ENCODE measurements at regions of chr3 and their contacts with region 1.

Region 1: DNA sequence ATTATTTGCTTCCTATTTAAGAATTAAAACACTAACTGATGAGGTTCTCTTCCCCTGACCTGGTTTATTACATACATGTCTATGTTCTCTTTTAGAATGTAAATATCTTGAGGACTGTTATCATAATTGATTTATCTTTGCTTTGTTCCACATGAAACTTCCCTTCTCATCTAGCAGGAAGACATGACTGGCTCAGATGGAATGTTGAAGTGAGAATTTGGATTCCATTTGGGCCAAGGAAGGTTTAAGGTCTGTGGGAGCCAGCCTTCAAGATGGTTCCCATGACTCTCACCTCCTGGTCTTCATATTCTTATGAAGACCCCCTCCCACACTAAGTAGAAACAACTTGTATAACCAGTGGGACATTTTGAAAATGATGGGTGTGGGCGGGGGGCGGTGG is 222.2 kb upstream of the GADL1 start:
- DNase-seq: peak; percentile 16
- ATAC-seq: no peak
- H3K4me3 ChIP-seq: no peak overlapping the region
- H3K27ac ChIP-seq: no peak overlapping the region
- H3K4me1 ChIP-seq: peaks cover 9% of the 10 kb centered on the region
- H3K27me3 ChIP-seq: no peaks in the 10 kb centered on the region
- CTCF ChIP-seq: no peak

Region 2: DNA sequence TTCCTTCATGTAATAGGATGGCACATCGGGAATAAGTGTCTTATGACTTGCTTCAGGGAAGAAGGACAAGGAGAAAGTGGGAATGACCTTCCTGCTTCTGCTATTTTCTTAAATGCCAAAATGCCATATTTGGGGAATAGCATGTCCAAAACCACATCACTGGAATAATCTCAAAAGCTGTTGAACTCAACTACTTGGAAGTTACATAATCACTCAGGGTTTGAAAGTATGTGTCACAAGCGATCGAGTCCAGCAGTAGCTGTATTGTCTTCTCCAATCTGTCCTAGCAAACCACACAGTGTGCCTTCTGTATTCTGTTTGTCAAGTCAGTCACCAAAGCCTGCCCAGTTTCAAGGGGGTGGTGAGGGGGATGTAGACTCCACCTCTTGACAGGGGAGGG is 163.9 kb before region 1 on chr3:
- CTCF ChIA-PET with region 1: no interaction called
- POLR2A ChIA-PET with region 1: interaction called, 15 read pairs
- intact Hi-C with region 1: no loop called
- DNase-seq: no peak
- ATAC-seq: no peak
- H3K4me3 ChIP-seq: no peak overlapping the region
- H3K27ac ChIP-seq: no peak overlapping the region
- H3K4me1 ChIP-seq: no peaks in the 10 kb centered on the region
- H3K27me3 ChIP-seq: no peaks in the 10 kb centered on the region
- CTCF ChIP-seq: no peak

Measured in PC-3 (cell line).